Activated T-helper 1 cell treated with anti-CD3 and anti-CD28 coated beads, Interleukin-12 subunit alpha, Interleukin-12 subunit beta, Interleukin-2, Interleukin-4 antibody, amounts not matched to agents 30 ng/mL and 10 ng/mL and 1 ng/mL, durations not matched to agents 14 hours and 24 hours and 36 hours (primary cell): ENCODE measurements at regions of chr20 and their contacts with region 1.

Region 1: GRCh38 chr20:38997622-38998021 is 35.5 kb downstream of the DHX35 start:
- DNase-seq: peak; percentile 15
- H3K4me3 Mint-ChIP-seq: peak overlapping the region; percentile 46
- H3K27ac Mint-ChIP-seq: peak overlapping the region; percentile 71
- H3K4me1 Mint-ChIP-seq: peaks cover 38% of the 10 kb centered on the region
- H3K27me3 Mint-ChIP-seq: no peaks in the 10 kb centered on the region

Region 2: GRCh38 chr20:38962044-38962927 is 35.3 kb before region 1 on chr20 and contains the start of gene DHX35:
- intact Hi-C with region 1: loop called (anchors 1 kb)
- DNase-seq: peak; percentile 99
- H3K4me3 Mint-ChIP-seq: peak within 1 kb of the TSS; percentile 98
- H3K27ac Mint-ChIP-seq: peak within 1 kb of the TSS; percentile 94
- H3K4me1 Mint-ChIP-seq: peaks cover 35% of the 10 kb centered on the region
- H3K27me3 Mint-ChIP-seq: no peaks in the 10 kb centered on the region
- total RNA-seq, gene DHX35: 17.2 and 17.3 TPM in 2 replicates

Region 3: GRCh38 chr20:39025883-39026282 is 28.3 kb after region 1 on chr20:
- intact Hi-C with region 1: no loop called
- DNase-seq: peak; percentile 15
- H3K4me3 Mint-ChIP-seq: no peak overlapping the region
- H3K27ac Mint-ChIP-seq: peak overlapping the region; percentile 18
- H3K4me1 Mint-ChIP-seq: peaks cover 42% of the 10 kb centered on the region
- H3K27me3 Mint-ChIP-seq: no peaks in the 10 kb centered on the region